ENCODE measurements at regions of chr2 and their contacts with region 1.

Region 1: GRCh38 chr2:227884511-227884947 is 13.1 kb downstream of the DAW1 start:
- DNase-seq: peak; percentile 77
- H3K4me3 ChIP-seq: no peak overlapping the region
- H3K27ac ChIP-seq: no peak overlapping the region
- H3K4me1 ChIP-seq: peaks cover 4% of the 10 kb centered on the region
- H3K27me3 ChIP-seq: no peaks in the 10 kb centered on the region
- CTCF ChIP-seq: peak; percentile 95 to 96
- POLR2A ChIP-seq: no peak

Region 2: GRCh38 chr2:227125506-227125905 is 759.0 kb before region 1 on chr2:
- CTCF ChIA-PET with region 1: no interaction called
- POLR2A ChIA-PET with region 1: no interaction called
- dilution Hi-C with region 1: no loop called
- intact Hi-C with region 1: loop called (anchors 5 kb)
- DNase-seq: no peak
- H3K4me3 ChIP-seq: no peak overlapping the region
- H3K27ac ChIP-seq: no peak overlapping the region
- H3K4me1 ChIP-seq: no peaks in the 10 kb centered on the region
- H3K27me3 ChIP-seq: no peaks in the 10 kb centered on the region
- CTCF ChIP-seq: no peak
- POLR2A ChIP-seq: no peak

Region 3: GRCh38 chr2:227406177-227407031 is 478.1 kb before region 1 on chr2:
- CTCF ChIA-PET with region 1: interaction called, 4 read pairs
- POLR2A ChIA-PET with region 1: no interaction called
- dilution Hi-C with region 1: no loop called
- intact Hi-C with region 1: loop called (anchors 1 kb)
- DNase-seq: peak; percentile 96
- H3K4me3 ChIP-seq: no peak overlapping the region
- H3K27ac ChIP-seq: peak overlapping the region; percentile 85
- H3K4me1 ChIP-seq: peaks cover 8% of the 10 kb centered on the region
- H3K27me3 ChIP-seq: no peaks in the 10 kb centered on the region
- CTCF ChIP-seq: peak; percentile 57 to 81
- POLR2A ChIP-seq: peak; percentile 50

Region 4: DNA sequence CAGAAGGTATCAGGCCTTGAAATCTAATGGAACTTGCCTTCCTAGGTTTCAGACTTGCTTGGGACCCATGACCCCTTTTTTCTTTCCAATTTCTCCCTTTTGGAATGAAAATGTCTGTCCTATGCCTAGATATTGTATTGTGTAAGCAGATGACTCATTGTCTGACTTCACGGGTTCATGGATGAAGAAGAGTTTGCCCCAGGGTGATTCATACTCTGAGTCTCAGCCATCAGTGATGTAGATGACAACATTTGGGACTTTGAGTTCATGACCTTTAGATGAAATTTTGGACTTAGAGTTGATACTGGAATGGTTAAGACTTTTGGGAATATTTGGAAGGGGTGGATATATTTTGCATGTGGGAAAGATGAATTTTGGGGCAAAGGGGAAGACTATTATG is 229.1 kb before region 1 on chr2:
- CTCF ChIA-PET with region 1: interaction called, 33 read pairs
- POLR2A ChIA-PET with region 1: no interaction called
- dilution Hi-C with region 1: no loop called
- intact Hi-C with region 1: loop called (anchors 1 kb)
- DNase-seq: peak; percentile 44
- H3K4me3 ChIP-seq: no peak overlapping the region
- H3K27ac ChIP-seq: no peak overlapping the region
- H3K4me1 ChIP-seq: no peaks in the 10 kb centered on the region
- H3K27me3 ChIP-seq: peaks cover 0 to 4% of the 10 kb centered on the region in 2 experiments
- CTCF ChIP-seq: no peak
- POLR2A ChIP-seq: no peak

Region 5: GRCh38 chr2:227703280-227703732 is 181.2 kb before region 1 on chr2:
- CTCF ChIA-PET with region 1: no interaction called
- POLR2A ChIA-PET with region 1: no interaction called
- dilution Hi-C with region 1: no loop called
- intact Hi-C with region 1: no loop called
- DNase-seq: no peak
- H3K4me3 ChIP-seq: no peak overlapping the region
- H3K27ac ChIP-seq: no peak overlapping the region
- H3K4me1 ChIP-seq: no peaks in the 10 kb centered on the region
- H3K27me3 ChIP-seq: no peaks in the 10 kb centered on the region
- CTCF ChIP-seq: no peak
- POLR2A ChIP-seq: no peak

Region 6: GRCh38 chr2:227774011-227774624 is 110.4 kb before region 1 on chr2:
- CTCF ChIA-PET with region 1: interaction called, 6 read pairs
- POLR2A ChIA-PET with region 1: no interaction called
- dilution Hi-C with region 1: no loop called
- intact Hi-C with region 1: loop called (anchors 1 kb)
- DNase-seq: peak; percentile 22
- H3K4me3 ChIP-seq: no peak overlapping the region
- H3K27ac ChIP-seq: no peak overlapping the region
- H3K4me1 ChIP-seq: no peaks in the 10 kb centered on the region
- H3K27me3 ChIP-seq: no peaks in the 10 kb centered on the region
- CTCF ChIP-seq: peak; percentile 25 to 31
- POLR2A ChIP-seq: no peak

Region 7: GRCh38 chr2:227834423-227834822 is 50.1 kb before region 1 on chr2:
- CTCF ChIA-PET with region 1: no interaction called
- POLR2A ChIA-PET with region 1: no interaction called
- dilution Hi-C with region 1: no loop called
- intact Hi-C with region 1: no loop called
- DNase-seq: no peak
- H3K4me3 ChIP-seq: no peak overlapping the region
- H3K27ac ChIP-seq: no peak overlapping the region
- H3K4me1 ChIP-seq: no peaks in the 10 kb centered on the region
- H3K27me3 ChIP-seq: no peaks in the 10 kb centered on the region
- CTCF ChIP-seq: no peak
- POLR2A ChIP-seq: no peak

Region 8: DNA sequence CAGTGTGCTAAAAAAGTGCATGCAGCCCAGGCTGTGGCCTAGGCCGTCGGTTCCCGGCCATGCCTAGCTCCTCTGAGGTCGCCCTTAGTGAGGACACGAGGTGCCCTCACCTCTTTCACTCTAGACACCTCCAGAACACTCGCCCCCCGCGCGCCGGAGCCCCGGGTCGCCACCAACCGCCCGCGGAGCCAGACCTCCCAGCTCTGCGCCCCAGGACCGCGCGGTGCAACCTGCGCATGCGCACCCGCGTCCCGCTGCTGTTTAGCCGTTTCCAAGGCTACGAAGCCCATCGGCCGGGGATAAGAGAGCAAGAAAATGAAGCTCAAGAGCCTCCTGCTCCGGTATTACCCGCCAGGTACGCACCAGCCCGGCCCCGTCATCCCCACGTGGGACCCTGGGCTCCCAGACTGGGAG is 13.1 kb before region 1 on chr2 and contains the start of gene DAW1:
- CTCF ChIA-PET with region 1: interaction called, 27 read pairs
- POLR2A ChIA-PET with region 1: no interaction called
- dilution Hi-C with region 1: no loop called
- intact Hi-C with region 1: loop called (anchors 1 kb)
- DNase-seq: peak; percentile 78
- H3K4me3 ChIP-seq: peak within 1 kb of the TSS; percentile 47 to 54 (median 52)
- H3K27ac ChIP-seq: peak within 1 kb of the TSS; percentile 99
- H3K4me1 ChIP-seq: peaks cover 33% of the 10 kb centered on the region
- H3K27me3 ChIP-seq: no peaks in the 10 kb centered on the region
- CTCF ChIP-seq: no peak
- POLR2A ChIP-seq: no peak
- total RNA-seq, gene DAW1: 2.0 and 3.2 TPM in 2 replicates

Region 9: DNA sequence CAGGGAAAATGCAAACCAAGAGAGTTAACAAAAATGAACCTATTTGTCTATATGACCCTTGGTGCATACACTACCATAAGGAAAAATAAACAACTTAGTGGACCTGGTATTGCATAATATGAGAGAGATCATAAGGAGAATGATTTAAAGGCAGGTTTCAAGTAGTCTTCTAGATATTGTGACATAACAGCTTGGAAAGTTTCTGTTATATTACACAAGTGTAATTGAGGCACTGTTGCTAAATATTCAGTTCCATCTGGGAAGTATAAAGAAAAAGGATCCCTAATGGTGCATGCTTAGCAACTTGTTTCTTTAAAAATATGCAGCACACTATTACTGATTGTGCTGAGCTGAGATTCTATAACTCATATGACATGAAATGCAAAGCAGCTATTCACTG is 549.2 kb after region 1 on chr2:
- CTCF ChIA-PET with region 1: no interaction called
- POLR2A ChIA-PET with region 1: no interaction called
- dilution Hi-C with region 1: no loop called
- intact Hi-C with region 1: no loop called
- DNase-seq: no peak
- H3K4me3 ChIP-seq: no peak overlapping the region
- H3K27ac ChIP-seq: no peak overlapping the region
- H3K4me1 ChIP-seq: no peaks in the 10 kb centered on the region
- H3K27me3 ChIP-seq: no peaks in the 10 kb centered on the region
- CTCF ChIP-seq: no peak
- POLR2A ChIP-seq: no peak

Region 10: GRCh38 chr2:228516019-228516418 is 631.5 kb after region 1 on chr2:
- CTCF ChIA-PET with region 1: no interaction called
- POLR2A ChIA-PET with region 1: no interaction called
- dilution Hi-C with region 1: no loop called
- intact Hi-C with region 1: no loop called
- DNase-seq: no peak
- H3K4me3 ChIP-seq: no peak overlapping the region
- H3K27ac ChIP-seq: no peak overlapping the region
- H3K4me1 ChIP-seq: no peaks in the 10 kb centered on the region
- H3K27me3 ChIP-seq: no peaks in the 10 kb centered on the region
- CTCF ChIP-seq: no peak
- POLR2A ChIP-seq: no peak